Activated CD4-positive, alpha-beta memory T cell treated with anti-CD3 and anti-CD28 coated beads for 36 hours (primary cell): ENCODE measurements at regions of chr1 and their contacts with region 1.

Region 1: DNA sequence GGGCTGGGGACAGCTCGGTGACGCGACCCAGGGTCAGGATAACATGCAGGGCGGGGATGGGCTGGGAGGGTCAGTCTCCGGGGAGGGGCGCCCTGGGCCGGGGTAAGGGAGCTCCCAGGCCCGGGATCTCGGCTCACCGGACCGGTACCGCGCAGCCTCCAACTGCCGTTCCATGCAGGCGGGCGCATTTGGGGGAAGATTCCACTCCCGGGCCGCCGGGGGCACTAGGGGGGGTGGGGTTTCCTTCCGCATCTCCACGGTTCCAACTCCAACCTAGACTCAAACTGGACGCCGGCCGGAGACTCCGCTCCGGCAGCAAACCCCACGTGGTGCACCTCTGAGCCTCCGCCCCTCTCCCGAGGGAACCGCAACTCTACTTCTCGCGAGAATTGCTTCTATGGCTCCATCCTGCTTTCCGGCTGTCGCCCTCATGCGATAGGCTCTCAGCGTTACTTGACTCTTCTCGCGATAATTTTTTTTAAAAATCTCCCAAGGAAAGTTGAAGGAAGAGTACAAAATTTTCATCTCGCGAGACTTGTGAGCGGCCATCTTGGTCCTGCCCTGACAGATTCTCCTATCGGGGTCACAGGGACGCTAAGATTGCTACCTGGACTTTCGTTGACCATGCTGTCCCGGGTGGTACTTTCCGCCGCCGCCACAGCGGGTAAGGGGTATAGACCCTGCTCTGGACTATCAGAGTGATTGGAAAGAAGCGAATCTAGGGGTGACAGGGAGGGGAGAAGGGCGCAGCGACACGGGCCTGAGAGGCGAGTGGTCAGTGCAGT is at the starts of genes ATP5PB and WDR77:
- DNase-seq: peak; percentile 95
- H3K4me3 Mint-ChIP-seq: peak within 1 kb of the TSS; percentile 100
- H3K27ac Mint-ChIP-seq: peak within 1 kb of the TSS; percentile 94
- H3K4me1 Mint-ChIP-seq: peaks cover 73% of the 10 kb centered on the region
- H3K27me3 Mint-ChIP-seq: no peaks in the 10 kb centered on the region
- total RNA-seq, gene ATP5PB: 300 to 302 TPM
- total RNA-seq, gene WDR77: 44.6 to 48.4 TPM

Region 2: DNA sequence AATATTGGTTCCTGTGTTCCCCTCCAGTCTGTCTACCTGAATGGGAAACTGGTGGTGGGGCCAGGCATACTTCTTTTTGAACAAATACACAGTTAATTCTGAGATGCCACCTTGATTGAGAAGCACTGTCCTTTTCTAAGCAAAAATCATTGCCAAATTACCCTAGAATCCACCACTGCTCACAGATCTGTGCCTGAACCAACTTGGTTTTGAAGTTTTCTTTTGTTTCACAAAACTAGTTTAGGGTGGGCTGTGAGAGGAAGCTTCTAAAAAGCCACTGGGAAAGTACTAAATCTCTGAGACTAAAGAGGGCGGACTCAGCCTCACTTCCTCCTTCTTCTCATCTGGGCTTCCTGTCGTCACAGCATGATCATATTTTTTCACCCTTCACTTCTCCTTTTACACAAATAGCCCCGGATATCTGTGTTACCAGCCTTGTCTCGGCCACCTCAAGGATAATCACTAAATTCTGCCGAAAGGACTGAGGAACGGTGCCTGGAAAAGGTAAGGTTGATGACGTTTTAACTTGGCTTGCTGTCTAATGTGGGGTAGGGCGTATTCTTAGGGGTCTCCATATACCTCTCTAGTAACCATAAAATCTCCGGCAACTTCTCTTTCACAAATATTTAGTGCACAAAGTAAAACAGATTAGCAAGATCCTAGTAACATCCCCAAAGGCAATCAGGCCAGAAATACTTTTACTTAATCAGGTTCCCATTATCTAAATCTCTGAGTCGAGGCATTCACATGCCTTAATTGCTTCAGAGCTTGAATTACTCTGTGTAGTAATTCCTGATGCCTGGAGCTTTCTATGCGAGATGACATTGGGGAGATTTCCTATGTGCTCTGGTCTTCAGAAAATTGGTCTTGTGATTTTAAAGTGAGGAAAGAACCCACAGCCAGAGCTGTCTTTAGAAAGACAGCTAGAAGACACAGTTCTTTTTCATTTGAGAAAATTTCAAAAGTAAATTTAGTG is 576.1 kb before region 1 on chr1 and contains the start of gene CD53:
- CTCF ChIA-PET with region 1: no interaction called
- POLR2A ChIA-PET with region 1: no interaction called
- intact Hi-C with region 1: loop called (anchors 10 kb)
- DNase-seq: peak; percentile 63
- H3K4me3 Mint-ChIP-seq: peak within 1 kb of the TSS; percentile 98
- H3K27ac Mint-ChIP-seq: peak within 1 kb of the TSS; percentile 99
- H3K4me1 Mint-ChIP-seq: peaks cover 37% of the 10 kb centered on the region
- H3K27me3 Mint-ChIP-seq: no peaks in the 10 kb centered on the region
- total RNA-seq, gene CD53: 240 to 246 TPM

Region 3: DNA sequence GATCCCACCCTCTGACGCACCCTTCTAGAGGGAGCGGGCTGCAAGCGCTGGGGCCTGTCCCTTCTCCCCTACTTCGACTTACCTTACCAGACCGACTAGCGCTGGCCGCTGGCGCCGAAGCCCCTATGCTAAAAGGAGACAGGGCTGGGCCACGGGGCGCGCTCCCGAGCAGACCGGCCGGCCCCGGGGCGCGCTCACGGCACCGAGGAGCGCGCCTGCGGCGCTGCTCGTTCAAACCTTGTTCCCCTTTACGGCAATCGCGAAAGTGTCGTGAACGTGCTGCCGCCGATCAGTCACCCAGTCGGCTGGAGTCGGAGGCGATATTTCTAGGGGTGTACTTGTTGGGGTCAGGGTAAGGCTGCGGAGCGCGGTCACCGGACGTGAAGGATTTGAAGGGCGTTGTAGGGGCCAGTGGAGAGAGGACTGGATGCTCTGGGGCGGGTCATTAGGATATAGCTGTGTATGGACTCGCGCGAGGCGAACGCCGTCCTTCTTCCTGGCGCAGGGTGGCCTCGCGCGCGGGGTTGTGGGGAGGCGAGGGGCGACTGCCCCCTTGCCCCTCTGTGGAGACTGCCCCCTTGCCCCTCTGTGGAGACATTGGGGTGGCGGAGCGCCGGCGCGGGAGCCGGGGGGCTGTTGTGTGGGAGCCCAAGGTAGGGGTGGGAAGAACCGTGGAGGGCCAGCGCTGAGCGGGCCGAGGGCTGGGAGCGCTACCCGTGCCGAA is 309.0 kb before region 1 on chr1 and contains the starts of genes CEPT1 and DRAM2:
- CTCF ChIA-PET with region 1: no interaction called
- POLR2A ChIA-PET with region 1: no interaction called
- intact Hi-C with region 1: loop called (anchors 5 kb)
- DNase-seq: peak; percentile 95
- H3K4me3 Mint-ChIP-seq: peak within 1 kb of the TSS; percentile 92
- H3K27ac Mint-ChIP-seq: peak within 1 kb of the TSS; percentile 88
- H3K4me1 Mint-ChIP-seq: peaks cover 34% of the 10 kb centered on the region
- H3K27me3 Mint-ChIP-seq: no peaks in the 10 kb centered on the region
- total RNA-seq, gene CEPT1: 23.9 to 28.8 TPM
- total RNA-seq, gene DRAM2: 30.1 to 30.5 TPM

Region 4: GRCh38 chr1:111164151-111164550 is 285.0 kb before region 1 on chr1:
- CTCF ChIA-PET with region 1: no interaction called
- POLR2A ChIA-PET with region 1: no interaction called
- intact Hi-C with region 1: no loop called
- DNase-seq: no peak
- H3K4me3 Mint-ChIP-seq: no peak overlapping the region
- H3K27ac Mint-ChIP-seq: no peak overlapping the region
- H3K4me1 Mint-ChIP-seq: peaks cover 9% of the 10 kb centered on the region
- H3K27me3 Mint-ChIP-seq: no peaks in the 10 kb centered on the region

Region 5: DNA sequence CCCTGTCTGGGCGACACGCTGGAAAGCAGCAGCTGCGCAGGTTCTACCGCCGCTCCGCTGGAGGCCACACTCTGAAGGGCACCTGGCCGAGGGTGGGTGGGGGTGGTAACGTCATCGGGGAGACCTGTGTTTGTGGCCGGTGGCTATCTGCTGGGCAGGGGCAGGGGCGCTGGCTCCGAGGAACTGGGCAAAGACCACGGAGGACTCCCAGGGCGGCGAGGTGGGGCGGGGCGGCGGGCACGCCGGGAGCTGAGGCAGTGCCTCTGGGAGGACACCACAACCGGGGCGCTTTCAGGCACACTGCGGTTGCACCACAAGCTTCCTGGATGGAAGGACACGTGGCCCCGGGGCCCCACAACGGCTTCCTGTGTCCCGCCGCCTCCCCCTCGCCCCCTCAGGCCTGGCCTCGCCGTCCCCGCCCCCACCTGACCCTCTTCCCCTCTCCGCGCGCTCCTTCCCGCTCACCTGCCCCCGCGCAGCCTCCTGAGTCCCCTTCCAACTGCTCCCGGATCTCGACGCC is 245.4 kb before region 1 on chr1:
- CTCF ChIA-PET with region 1: interaction called, 3 read pairs
- POLR2A ChIA-PET with region 1: no interaction called
- intact Hi-C with region 1: loop called (anchors 5 kb)
- DNase-seq: peak; percentile 93
- H3K4me3 Mint-ChIP-seq: peak overlapping the region; percentile 92
- H3K27ac Mint-ChIP-seq: peak overlapping the region; percentile 97
- H3K4me1 Mint-ChIP-seq: peaks cover 38% of the 10 kb centered on the region
- H3K27me3 Mint-ChIP-seq: no peaks in the 10 kb centered on the region

Region 6: DNA sequence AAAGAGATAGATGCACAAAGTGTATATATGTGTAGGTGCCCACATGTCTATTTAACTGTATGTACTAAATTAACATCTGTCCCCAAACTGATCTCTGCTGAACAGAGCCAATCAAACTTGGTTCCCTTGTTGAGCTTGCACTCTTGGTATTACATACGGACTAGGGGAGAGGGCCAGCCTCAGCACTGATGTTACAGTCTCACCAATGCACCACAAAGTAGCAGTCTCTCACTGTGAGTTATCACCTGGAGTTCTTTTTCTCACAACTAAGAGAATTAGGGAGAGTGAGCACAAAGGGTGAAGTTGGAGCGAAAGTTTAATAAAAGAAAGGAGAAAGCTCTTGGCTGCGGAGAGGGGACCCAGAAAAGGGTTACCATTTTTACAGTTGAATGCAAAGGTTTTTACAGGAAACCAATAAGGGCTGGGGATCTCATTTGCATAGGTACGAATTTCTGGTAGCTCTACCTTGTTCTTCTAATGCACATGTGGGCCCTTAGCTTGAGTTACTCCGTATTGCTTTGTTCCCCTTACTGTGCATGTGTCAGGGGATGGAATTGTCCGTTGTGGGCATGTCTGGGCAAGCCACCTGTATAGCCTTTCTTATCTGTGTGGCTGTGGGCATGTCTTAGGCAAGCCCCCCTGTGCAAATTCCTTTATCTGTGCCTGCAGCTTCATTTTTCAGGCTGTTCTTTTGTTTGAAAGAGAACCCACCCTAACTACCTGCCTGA is 234.9 kb before region 1 on chr1:
- CTCF ChIA-PET with region 1: interaction called, 5 read pairs
- POLR2A ChIA-PET with region 1: no interaction called
- intact Hi-C with region 1: loop called (anchors 2 kb)
- DNase-seq: peak; percentile 45
- H3K4me3 Mint-ChIP-seq: peak overlapping the region; percentile 66
- H3K27ac Mint-ChIP-seq: peak overlapping the region; percentile 95
- H3K4me1 Mint-ChIP-seq: peaks cover 72% of the 10 kb centered on the region
- H3K27me3 Mint-ChIP-seq: peaks cover 3% of the 10 kb centered on the region

Region 7: GRCh38 chr1:111471012-111471411 is 21.9 kb after region 1 on chr1:
- CTCF ChIA-PET with region 1: interaction called, 5 read pairs
- POLR2A ChIA-PET with region 1: interaction called, 5 read pairs
- intact Hi-C with region 1: loop called (anchors 1 kb)
- DNase-seq: peak; percentile 85
- H3K4me3 Mint-ChIP-seq: no peak overlapping the region
- H3K27ac Mint-ChIP-seq: no peak overlapping the region
- H3K4me1 Mint-ChIP-seq: peaks cover 31% of the 10 kb centered on the region
- H3K27me3 Mint-ChIP-seq: no peaks in the 10 kb centered on the region

Region 8: GRCh38 chr1:111647736-111648135 is 198.6 kb after region 1 on chr1:
- CTCF ChIA-PET with region 1: no interaction called
- POLR2A ChIA-PET with region 1: no interaction called
- intact Hi-C with region 1: no loop called
- DNase-seq: no peak
- H3K4me3 Mint-ChIP-seq: no peak overlapping the region
- H3K27ac Mint-ChIP-seq: peak overlapping the region; percentile 75
- H3K4me1 Mint-ChIP-seq: peaks cover 75% of the 10 kb centered on the region
- H3K27me3 Mint-ChIP-seq: no peaks in the 10 kb centered on the region

Region 9: DNA sequence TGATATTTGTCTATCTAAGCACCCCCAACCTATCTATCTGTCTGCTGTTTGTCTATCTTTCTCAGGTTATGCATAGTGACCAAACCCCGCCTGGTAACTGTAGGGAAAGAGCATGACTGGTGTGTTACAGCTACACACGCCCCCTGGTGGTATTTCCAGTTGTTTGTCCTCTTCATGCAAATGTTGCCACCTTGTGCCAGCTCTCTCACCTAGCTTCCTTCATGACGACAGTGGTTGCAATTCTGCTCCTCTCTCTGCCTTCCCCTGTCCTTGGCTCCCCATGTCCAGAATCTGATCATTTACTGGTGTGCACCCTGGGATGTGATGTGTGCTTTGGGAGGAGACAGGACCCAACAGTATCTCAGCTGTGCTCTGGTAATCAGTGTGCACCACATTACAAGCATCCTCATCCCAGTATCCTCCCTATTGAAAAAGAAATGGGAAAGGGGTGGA is 298.2 kb after region 1 on chr1:
- CTCF ChIA-PET with region 1: interaction called, 11 read pairs
- POLR2A ChIA-PET with region 1: no interaction called
- intact Hi-C with region 1: no loop called
- DNase-seq: peak; percentile 80
- H3K4me3 Mint-ChIP-seq: no peak overlapping the region
- H3K27ac Mint-ChIP-seq: no peak overlapping the region
- H3K4me1 Mint-ChIP-seq: peaks cover 3% of the 10 kb centered on the region
- H3K27me3 Mint-ChIP-seq: no peaks in the 10 kb centered on the region